ENCODE measurements at regions of chr2 and their contacts with region 1.

Region 1: GRCh38 chr2:75640621-75641121 is 5.9 kb upstream of the MRPL19 start:
- DNase-seq: peak; percentile 79
- ATAC-seq: peak; percentile 100
- H3K4me3 ChIP-seq: no peak overlapping the region
- H3K27ac ChIP-seq: no peak overlapping the region
- H3K4me1 ChIP-seq: no peaks in the 10 kb centered on the region
- H3K27me3 ChIP-seq: peaks cover 13% of the 10 kb centered on the region
- CTCF ChIP-seq: peak; percentile 99
- POLR2A ChIP-seq: no peak
- RAD21 ChIP-seq: peak; percentile 99

Region 2: DNA sequence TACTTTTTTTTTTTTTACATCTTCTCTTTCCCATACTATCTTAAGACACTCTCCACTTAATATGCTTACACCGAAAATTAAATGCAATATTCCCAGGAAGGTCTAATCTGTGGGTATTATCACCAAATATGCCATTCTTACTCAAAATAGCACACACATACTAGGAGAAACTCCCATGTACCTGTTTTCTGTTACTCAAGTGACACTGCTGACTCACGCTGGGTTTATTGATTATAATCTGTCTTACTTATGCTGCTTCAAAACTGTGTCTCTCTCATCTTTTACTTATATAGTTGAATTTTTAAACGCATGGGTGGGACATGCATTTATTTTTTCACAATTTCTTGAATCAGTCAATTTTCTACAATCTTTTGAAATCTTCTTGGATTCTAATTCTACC is 35.8 kb after region 1 on chr2:
- CTCF ChIA-PET with region 1: interaction called, 17 read pairs
- POLR2A ChIA-PET with region 1: no interaction called
- dilution Hi-C with region 1: no loop called
- in situ Hi-C with region 1: no loop called
- intact Hi-C with region 1: loop called (anchors 1 kb)
- DNase-seq: no peak
- ATAC-seq: no peak
- H3K4me3 ChIP-seq: no peak overlapping the region
- H3K27ac ChIP-seq: no peak overlapping the region
- H3K4me1 ChIP-seq: no peaks in the 10 kb centered on the region
- H3K27me3 ChIP-seq: no peaks in the 10 kb centered on the region
- CTCF ChIP-seq: no peak
- POLR2A ChIP-seq: no peak
- RAD21 ChIP-seq: no peak

Region 3: GRCh38 chr2:75787532-75788132 is 147.0 kb after region 1 on chr2:
- CTCF ChIA-PET with region 1: interaction called, 4 read pairs
- POLR2A ChIA-PET with region 1: no interaction called
- dilution Hi-C with region 1: no loop called
- in situ Hi-C with region 1: no loop called
- intact Hi-C with region 1: loop called (anchors 5 kb)
- DNase-seq: peak; percentile 29
- ATAC-seq: peak; percentile 62; the same call in 1 of the 2 replicates
- H3K4me3 ChIP-seq: no peak overlapping the region
- H3K27ac ChIP-seq: no peak overlapping the region
- H3K4me1 ChIP-seq: no peaks in the 10 kb centered on the region
- H3K27me3 ChIP-seq: no peaks in the 10 kb centered on the region
- CTCF ChIP-seq: peak; percentile 56
- POLR2A ChIP-seq: no peak
- RAD21 ChIP-seq: peak; percentile 40

Region 4: GRCh38 chr2:75844651-75845050 is 204.0 kb after region 1 on chr2:
- CTCF ChIA-PET with region 1: no interaction called
- POLR2A ChIA-PET with region 1: no interaction called
- dilution Hi-C with region 1: no loop called
- in situ Hi-C with region 1: no loop called
- intact Hi-C with region 1: no loop called
- DNase-seq: no peak
- ATAC-seq: no peak
- H3K4me3 ChIP-seq: no peak overlapping the region
- H3K27ac ChIP-seq: no peak overlapping the region
- H3K4me1 ChIP-seq: no peaks in the 10 kb centered on the region
- H3K27me3 ChIP-seq: no peaks in the 10 kb centered on the region
- CTCF ChIP-seq: no peak
- POLR2A ChIP-seq: no peak
- RAD21 ChIP-seq: no peak

Region 5: GRCh38 chr2:76019128-76019527 is 378.5 kb after region 1 on chr2:
- CTCF ChIA-PET with region 1: no interaction called
- POLR2A ChIA-PET with region 1: no interaction called
- dilution Hi-C with region 1: no loop called
- in situ Hi-C with region 1: no loop called
- intact Hi-C with region 1: no loop called
- DNase-seq: no peak
- ATAC-seq: no peak
- H3K4me3 ChIP-seq: no peak overlapping the region
- H3K27ac ChIP-seq: no peak overlapping the region
- H3K4me1 ChIP-seq: no peaks in the 10 kb centered on the region
- H3K27me3 ChIP-seq: no peaks in the 10 kb centered on the region
- CTCF ChIP-seq: no peak
- POLR2A ChIP-seq: no peak
- RAD21 ChIP-seq: no peak

Measured in IMR-90 (cell line).